Gastrocnemius medialis (tissue), 4 donors: ENCODE measurements at regions of chr7 and their contacts with region 1.

Region 1: GRCh38 chr7:101138213-101138870 is 11.4 kb downstream of the SERPINE1 start:
- DNase-seq: peak; percentile 65 to 84
- ATAC-seq: peak; percentile 91 to 98
- H3K4me3 ChIP-seq: peak overlapping the region in 3 of 4 donors; percentile 10 to 27 (median 18)
- H3K27ac ChIP-seq: peak overlapping the region; percentile 47 to 69 (median 67)
- H3K4me1 ChIP-seq: peaks cover 0 to 8% of the 10 kb centered on the region in 2 donors
- H3K27me3 ChIP-seq: no peaks in the 10 kb centered on the region
- CTCF ChIP-seq: peak; percentile 67 to 82 (median 76)
- POLR2A ChIP-seq: no peak

Region 2: DNA sequence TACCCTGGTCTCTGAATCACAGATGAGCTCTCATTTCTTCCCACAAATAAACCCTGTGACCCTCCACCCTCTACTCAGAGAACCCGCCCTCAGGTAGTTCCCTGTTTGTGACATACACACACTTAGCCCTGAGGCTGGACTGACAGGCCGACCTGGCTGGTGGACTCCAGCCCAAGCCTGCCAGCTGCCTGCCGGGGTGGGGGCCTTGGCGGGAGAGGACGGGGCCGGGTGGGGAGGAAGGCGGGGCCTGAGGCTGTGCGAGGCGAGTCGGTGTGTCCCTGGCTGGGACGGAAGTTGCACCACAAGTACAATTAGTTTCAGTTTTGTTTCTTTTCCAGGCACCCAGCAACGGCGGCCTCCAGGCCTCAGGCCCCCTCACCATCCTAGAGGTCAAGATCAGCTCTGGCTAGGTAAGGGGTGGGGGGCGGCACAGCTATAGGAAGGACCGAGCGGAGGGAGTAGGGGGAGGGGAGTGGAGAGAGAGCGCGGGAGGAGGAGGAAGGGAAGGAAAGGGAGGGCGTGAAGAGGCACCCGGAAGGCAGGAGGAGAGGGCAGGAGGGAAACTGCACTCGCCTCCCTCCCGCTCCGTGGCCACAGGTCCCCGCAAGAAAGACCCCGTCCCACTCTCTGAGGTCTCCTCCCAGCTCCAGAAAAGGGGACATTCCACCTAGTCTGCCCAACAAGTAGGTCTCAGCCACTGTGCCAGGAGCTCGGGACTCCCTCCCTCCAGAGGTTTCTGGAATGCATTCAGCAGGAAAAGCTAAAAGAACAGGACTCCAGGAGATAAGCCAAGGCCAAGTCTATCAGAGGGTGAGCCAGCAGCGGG is 53.0 kb before region 1 on chr7 and contains the start of gene TRIM56:
- in situ Hi-C with region 1: loop called in 2 of 4 experiments (anchors 5 to 10 kb)
- intact Hi-C with region 1: no loop called
- DNase-seq: peak; percentile 76 to 91
- ATAC-seq: peak; percentile 93 to 94
- H3K4me3 ChIP-seq: peak within 1 kb of the TSS; percentile 74 to 87 (median 76)
- H3K27ac ChIP-seq: peak within 1 kb of the TSS; percentile 90 to 94 (median 91)
- H3K4me1 ChIP-seq: peaks cover 15 to 18% of the 10 kb centered on the region in 2 donors
- H3K27me3 ChIP-seq: no peaks in the 10 kb centered on the region
- CTCF ChIP-seq: no peak
- POLR2A ChIP-seq: peak in 1 of 2 donors; percentile 59
- total RNA-seq, gene TRIM56: 4.2 to 11.4 (median 6.9) TPM

Region 3: GRCh38 chr7:101094416-101095375 is 43.6 kb before region 1 on chr7:
- in situ Hi-C with region 1: loop called in 2 of 4 experiments (anchors 5 to 10 kb)
- intact Hi-C with region 1: loop called (anchors 1 kb)
- DNase-seq: peak in 1 of 2 donors; percentile 40
- ATAC-seq: peak in 1 of 2 donors; percentile 60
- H3K4me3 ChIP-seq: no peak overlapping the region
- H3K27ac ChIP-seq: peak overlapping the region; percentile 21 to 60 (median 38)
- H3K4me1 ChIP-seq: peaks cover 7 to 9% of the 10 kb centered on the region in 2 donors
- H3K27me3 ChIP-seq: no peaks in the 10 kb centered on the region
- CTCF ChIP-seq: peak; percentile 24 to 69 (median 58)
- POLR2A ChIP-seq: no peak

Region 4: DNA sequence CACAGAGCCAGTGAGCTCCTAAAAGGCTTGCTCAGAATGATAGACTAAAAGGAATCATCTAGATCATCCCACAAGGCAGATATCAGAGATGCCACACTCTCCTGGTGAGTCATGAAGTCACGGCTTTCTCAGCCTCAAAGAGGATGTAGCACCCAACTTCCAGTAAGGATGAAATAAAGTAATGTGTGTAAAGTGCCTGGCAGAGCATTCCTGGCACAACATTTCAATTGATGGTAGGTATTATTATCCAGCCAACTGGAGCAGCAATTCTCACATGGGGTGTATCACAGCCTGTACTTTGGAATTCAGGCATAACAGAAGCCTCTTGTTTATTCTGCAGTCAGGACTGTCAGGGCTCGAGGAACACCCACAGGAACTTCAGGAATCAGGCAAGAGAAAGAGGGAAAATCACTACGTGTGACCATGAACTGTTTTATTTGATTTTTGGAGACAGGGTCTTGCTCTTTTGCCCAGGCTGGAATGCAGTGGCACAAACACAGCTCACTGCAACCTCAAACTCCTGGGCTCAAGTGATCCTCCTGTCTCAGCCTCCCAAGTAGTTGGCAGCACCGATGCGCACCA is 47.0 kb after region 1 on chr7:
- in situ Hi-C with region 1: loop called in 1 of 4 experiments (anchors 5 kb)
- intact Hi-C with region 1: no loop called
- DNase-seq: no peak
- ATAC-seq: no peak
- H3K4me3 ChIP-seq: no peak overlapping the region
- H3K27ac ChIP-seq: no peak overlapping the region
- H3K4me1 ChIP-seq: no peaks in the 10 kb centered on the region
- H3K27me3 ChIP-seq: peaks cover 14 to 28% (median 18%) of the 10 kb centered on the region in 3 donors
- CTCF ChIP-seq: no peak
- POLR2A ChIP-seq: no peak

Region 5: GRCh38 chr7:101273206-101273605 is 134.9 kb after region 1 on chr7:
- in situ Hi-C with region 1: loop called in 2 of 4 experiments (anchors 10 kb)
- intact Hi-C with region 1: no loop called
- DNase-seq: no peak
- ATAC-seq: no peak
- H3K4me3 ChIP-seq: no peak overlapping the region
- H3K27ac ChIP-seq: no peak overlapping the region
- H3K4me1 ChIP-seq: no peaks in the 10 kb centered on the region
- H3K27me3 ChIP-seq: peaks cover 10 to 29% (median 29%) of the 10 kb centered on the region in 3 donors
- CTCF ChIP-seq: no peak
- POLR2A ChIP-seq: no peak

Region 6: DNA sequence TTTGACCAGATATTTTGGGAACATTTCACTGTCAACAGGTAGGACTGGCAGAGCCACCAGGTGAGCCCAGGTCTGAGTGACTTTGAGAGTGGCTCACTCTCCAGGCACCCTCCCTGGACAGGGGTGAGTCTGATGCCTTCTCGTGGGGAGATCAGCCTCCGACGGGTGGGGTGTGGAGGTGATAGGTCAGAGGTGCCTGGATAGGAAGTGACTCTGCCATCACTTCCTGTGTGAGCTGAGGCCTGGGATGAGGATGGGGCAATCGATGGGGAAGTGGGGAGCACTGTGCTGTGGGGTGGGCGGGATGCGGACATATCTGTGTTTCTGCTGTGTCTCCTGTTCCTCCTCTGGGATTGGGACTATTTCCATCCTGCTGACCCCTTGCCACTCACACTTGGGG is 148.7 kb after region 1 on chr7:
- in situ Hi-C with region 1: loop called in 2 of 4 experiments (anchors 5 to 10 kb)
- intact Hi-C with region 1: no loop called
- DNase-seq: no peak
- ATAC-seq: no peak
- H3K4me3 ChIP-seq: no peak overlapping the region
- H3K27ac ChIP-seq: no peak overlapping the region
- H3K4me1 ChIP-seq: no peaks in the 10 kb centered on the region
- H3K27me3 ChIP-seq: peaks cover 1 to 10% (median 4%) of the 10 kb centered on the region in 3 donors
- CTCF ChIP-seq: no peak
- POLR2A ChIP-seq: no peak

Region 7: DNA sequence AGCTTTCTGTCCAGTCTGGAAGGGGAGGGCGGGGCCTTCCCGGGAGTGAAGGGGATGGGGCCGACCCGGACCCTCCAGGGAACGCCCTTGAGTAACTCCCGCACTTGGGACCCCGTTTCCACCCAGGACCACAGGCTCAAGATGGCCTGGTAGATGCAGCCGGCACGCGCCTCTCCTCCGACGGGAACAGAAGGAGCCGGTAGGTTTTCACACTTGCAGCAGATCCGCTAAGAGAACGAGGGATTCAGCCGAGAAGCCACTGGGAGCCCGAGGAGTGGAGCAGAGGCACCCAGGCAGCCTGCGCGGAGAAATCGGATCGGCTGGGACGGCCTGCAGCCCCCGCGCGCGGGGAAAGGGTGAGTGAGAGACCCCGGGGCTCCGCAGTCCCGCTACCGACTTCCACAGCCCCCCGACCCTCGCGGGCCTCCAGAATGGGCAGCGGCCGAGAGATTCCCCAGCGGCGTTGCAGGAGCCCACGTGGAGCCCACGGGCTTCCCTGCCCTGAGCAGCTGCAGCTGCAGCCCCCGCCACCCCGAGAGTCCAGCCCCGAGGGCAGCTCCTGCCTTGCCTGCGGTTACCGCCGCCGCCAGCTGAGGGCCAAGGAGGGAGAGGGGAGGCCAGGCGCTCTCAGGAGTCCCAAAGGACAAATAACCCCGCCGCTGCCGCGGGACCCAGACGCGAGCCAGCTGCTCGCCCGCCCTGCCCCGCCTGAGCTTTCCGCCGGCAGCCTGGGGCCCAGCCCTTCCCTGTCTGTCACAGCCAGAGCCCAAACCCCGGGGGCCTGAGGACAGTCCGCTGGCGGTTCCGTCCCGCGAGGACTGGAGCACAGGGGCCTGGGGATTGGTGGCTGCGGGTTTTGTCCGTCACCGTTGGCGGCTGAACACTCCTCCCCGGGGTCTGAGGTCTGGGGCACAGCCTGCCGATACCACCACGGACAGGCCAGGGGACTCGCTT is 161.4 kb after region 1 on chr7:
- in situ Hi-C with region 1: no loop called
- intact Hi-C with region 1: no loop called
- DNase-seq: no peak
- ATAC-seq: no peak
- H3K4me3 ChIP-seq: peak overlapping the region in 1 of 4 donors; percentile 17
- H3K27ac ChIP-seq: no peak overlapping the region
- H3K4me1 ChIP-seq: no peaks in the 10 kb centered on the region
- H3K27me3 ChIP-seq: peaks cover 70 to 80% (median 80%) of the 10 kb centered on the region in 3 donors
- CTCF ChIP-seq: no peak
- POLR2A ChIP-seq: no peak